CD4-positive, alpha-beta memory T cell (primary cell): ENCODE measurements at regions of chr13 and their contacts with region 1.

Region 1: GRCh38 chr13:45464687-45465453 is at the start of gene COG3:
- DNase-seq: peak; percentile 94 to 97 (median 97)
- H3K4me3 ChIP-seq: peak within 1 kb of the TSS; percentile 62 to 81
- H3K4me3 Mint-ChIP-seq: peak within 1 kb of the TSS; percentile 90 to 95 (median 92)
- H3K27ac ChIP-seq: peak within 1 kb of the TSS; percentile 98
- H3K27ac Mint-ChIP-seq: peak within 1 kb of the TSS; percentile 88 to 97 (median 94)
- H3K4me1 ChIP-seq: peaks cover 53% of the 10 kb centered on the region
- H3K4me1 Mint-ChIP-seq: peaks cover 36 to 65% (median 49%) of the 10 kb centered on the region in 4 donors
- H3K27me3 ChIP-seq: no peaks in the 10 kb centered on the region
- H3K27me3 Mint-ChIP-seq: no peaks in the 10 kb centered on the region
- total RNA-seq, gene COG3: 51.1 to 59.8 TPM

Region 2: DNA sequence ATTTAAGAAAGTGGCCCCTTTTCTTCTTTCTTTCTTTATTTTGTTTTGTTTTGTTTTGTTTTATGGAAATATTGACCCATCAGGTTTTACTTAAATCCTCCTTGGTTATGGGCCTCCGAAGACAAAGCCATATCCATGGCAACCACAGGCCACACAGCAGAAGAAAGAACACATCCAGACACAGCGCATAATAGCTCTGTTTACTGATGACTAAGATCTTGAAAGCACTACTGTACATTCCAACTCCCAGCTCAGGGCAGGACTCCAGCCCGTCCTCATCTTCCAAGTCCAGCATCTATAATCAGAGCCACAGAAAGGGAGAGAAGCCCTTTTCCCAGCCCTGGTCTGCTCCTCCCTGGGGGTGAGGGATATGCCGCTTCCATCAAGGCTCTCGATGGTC is 559.9 kb before region 1 on chr13:
- CTCF ChIA-PET with region 1: no interaction called
- POLR2A ChIA-PET with region 1: no interaction called
- intact Hi-C with region 1: no loop called
- DNase-seq: no peak
- H3K4me3 ChIP-seq: no peak overlapping the region
- H3K4me3 Mint-ChIP-seq: no peak overlapping the region
- H3K27ac ChIP-seq: no peak overlapping the region
- H3K27ac Mint-ChIP-seq: no peak overlapping the region
- H3K4me1 ChIP-seq: no peaks in the 10 kb centered on the region
- H3K4me1 Mint-ChIP-seq: no peaks in the 10 kb centered on the region
- H3K27me3 ChIP-seq: no peaks in the 10 kb centered on the region
- H3K27me3 Mint-ChIP-seq: peaks cover 9 to 10% of the 10 kb centered on the region in 2 donors

Region 3: DNA sequence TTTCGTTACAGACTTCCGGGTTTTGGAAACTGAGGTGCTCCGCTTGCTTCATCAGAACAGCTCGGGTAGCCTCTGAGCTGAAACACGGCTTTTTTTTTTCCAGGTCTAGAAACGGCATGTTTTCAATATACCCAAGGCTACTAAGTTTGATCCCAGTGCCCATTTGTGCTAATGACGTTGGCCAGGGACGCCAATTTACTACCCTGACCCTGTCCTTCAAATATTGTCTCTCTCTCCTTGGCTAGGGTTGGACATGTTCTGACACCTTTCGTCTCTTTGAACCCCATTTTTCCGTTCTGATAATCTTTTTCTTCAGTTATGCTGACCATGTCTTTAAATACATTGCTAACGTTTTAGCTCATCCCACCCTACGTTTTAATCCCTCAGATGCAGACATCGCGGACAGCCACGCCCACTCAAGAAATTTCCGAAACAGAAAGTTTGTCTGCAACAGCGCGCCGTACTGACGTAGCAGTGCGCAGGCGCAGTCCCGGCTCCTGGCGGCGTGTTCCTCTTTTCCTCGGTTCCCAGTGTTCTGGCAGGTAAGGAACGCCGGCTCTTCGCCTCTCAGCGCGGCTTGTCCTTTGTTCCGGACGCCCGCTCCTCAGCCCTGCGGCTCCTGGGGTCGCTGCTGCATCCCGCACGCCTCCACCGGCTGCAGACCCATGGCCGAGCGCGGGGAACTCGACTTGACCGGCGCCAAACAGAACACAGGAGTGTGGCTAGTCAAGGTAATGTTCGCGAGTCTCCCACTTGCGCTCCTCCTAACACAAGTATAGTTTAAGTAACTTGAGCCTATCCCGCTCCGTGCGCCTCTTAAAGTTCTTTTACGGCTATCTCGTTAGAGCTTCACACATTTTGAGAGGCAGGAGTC is 344.6 kb before region 1 on chr13 and contains the start of gene GTF2F2:
- CTCF ChIA-PET with region 1: no interaction called
- POLR2A ChIA-PET with region 1: no interaction called
- intact Hi-C with region 1: loop called (anchors 1 kb)
- DNase-seq: peak; percentile 86 to 89 (median 87)
- H3K4me3 ChIP-seq: peak within 1 kb of the TSS; percentile 83 to 88
- H3K4me3 Mint-ChIP-seq: no peak within 1 kb of the TSS
- H3K27ac ChIP-seq: peak within 1 kb of the TSS; percentile 90
- H3K27ac Mint-ChIP-seq: no peak within 1 kb of the TSS
- H3K4me1 ChIP-seq: peaks cover 28% of the 10 kb centered on the region
- H3K4me1 Mint-ChIP-seq: peaks cover 6 to 21% (median 11%) of the 10 kb centered on the region in 4 donors
- H3K27me3 ChIP-seq: no peaks in the 10 kb centered on the region
- H3K27me3 Mint-ChIP-seq: no peaks in the 10 kb centered on the region
- total RNA-seq, gene GTF2F2: 12.3 to 14.7 TPM

Region 4: GRCh38 chr13:45417790-45418534 is 46.9 kb before region 1 on chr13 and contains the start of gene SLC25A30:
- CTCF ChIA-PET with region 1: interaction called, 20 read pairs
- POLR2A ChIA-PET with region 1: interaction called, 62 read pairs
- intact Hi-C with region 1: loop called (anchors 1 kb)
- DNase-seq: peak; percentile 86 to 93 (median 88)
- H3K4me3 ChIP-seq: peak within 1 kb of the TSS; percentile 84 to 94
- H3K4me3 Mint-ChIP-seq: peak within 1 kb of the TSS; percentile 94 to 97 (median 96)
- H3K27ac ChIP-seq: peak within 1 kb of the TSS; percentile 79
- H3K27ac Mint-ChIP-seq: peak within 1 kb of the TSS; percentile 94 to 99 (median 96)
- H3K4me1 ChIP-seq: peaks cover 37% of the 10 kb centered on the region
- H3K4me1 Mint-ChIP-seq: peaks cover 15 to 38% (median 25%) of the 10 kb centered on the region in 4 donors
- H3K27me3 ChIP-seq: no peaks in the 10 kb centered on the region
- H3K27me3 Mint-ChIP-seq: peaks cover 0 to 2% of the 10 kb centered on the region in 2 donors
- total RNA-seq, gene SLC25A30: 21.4 to 22.0 TPM

Region 5: DNA sequence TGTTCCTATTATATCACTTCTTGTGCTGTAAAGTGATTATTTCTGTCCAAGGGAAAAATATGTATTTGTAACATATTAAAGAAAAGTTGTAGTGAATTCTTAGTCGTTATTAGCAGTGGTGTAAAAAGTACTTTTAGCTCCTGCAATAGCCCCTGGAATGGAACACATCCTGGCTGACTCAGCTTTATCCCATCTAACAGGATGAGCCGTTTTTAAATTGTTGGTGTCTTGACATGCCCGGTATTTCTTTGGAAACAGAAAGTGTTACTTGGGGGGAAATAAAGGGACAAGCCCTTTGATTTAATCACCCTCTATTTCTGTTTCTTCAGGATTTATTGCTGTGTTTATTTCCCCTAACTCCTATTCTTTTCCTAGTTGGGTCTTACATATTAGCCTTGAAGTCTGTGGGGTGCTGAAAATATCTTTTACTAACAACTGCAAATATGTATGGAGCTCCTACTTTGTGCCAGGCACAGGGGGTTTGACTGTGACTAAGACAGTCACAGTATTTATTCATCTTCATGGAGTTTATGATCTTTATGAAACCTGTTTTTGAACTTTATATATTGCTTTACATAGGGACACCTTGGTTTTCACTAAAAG is 17.8 kb after region 1 on chr13:
- CTCF ChIA-PET with region 1: interaction called, 3 read pairs
- POLR2A ChIA-PET with region 1: interaction called, 10 read pairs
- intact Hi-C with region 1: no loop called
- DNase-seq: no peak
- H3K4me3 ChIP-seq: no peak overlapping the region
- H3K4me3 Mint-ChIP-seq: no peak overlapping the region
- H3K27ac ChIP-seq: no peak overlapping the region
- H3K27ac Mint-ChIP-seq: peak overlapping the region in 4 of 7 donors; percentile 4 to 73 (median 46)
- H3K4me1 ChIP-seq: no peaks in the 10 kb centered on the region
- H3K4me1 Mint-ChIP-seq: peaks cover 4 to 19% (median 9%) of the 10 kb centered on the region in 4 donors
- H3K27me3 ChIP-seq: no peaks in the 10 kb centered on the region
- H3K27me3 Mint-ChIP-seq: no peaks in the 10 kb centered on the region